ENCODE measurements at regions of chr14 and their contacts with region 1.

Region 1: GRCh38 chr14:94380225-94381148 is 7.9 kb downstream of the SERPINA1 start:
- DNase-seq: no peak
- ATAC-seq: no peak
- H3K4me3 ChIP-seq: no peak overlapping the region
- H3K27ac ChIP-seq: no peak overlapping the region
- H3K4me1 ChIP-seq: peaks cover 0 to 19% (median 0%) of the 10 kb centered on the region in 12 donors
- H3K27me3 ChIP-seq: peaks cover 0 to 22% (median 0%) of the 10 kb centered on the region in 9 donors
- CTCF ChIP-seq: no peak
- POLR2A ChIP-seq: no peak

Region 2: DNA sequence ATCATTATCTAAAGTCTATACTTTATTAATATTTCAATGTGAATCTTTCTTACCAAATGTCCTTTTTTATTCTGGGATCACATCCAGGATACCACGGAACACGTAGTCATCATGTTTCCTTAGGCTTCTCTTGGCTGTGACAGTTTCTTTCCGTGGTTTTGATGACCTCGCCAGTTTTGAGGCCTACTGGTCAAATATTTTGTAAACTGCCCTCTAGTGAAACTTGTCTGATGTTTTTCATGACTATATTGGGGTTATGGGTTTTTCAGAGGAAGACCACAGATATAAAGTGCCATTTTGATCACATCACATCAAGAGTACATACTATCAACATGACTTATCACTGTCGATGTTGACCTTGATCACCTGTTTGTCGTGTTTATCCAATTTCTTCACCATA is 43.2 kb before region 1 on chr14:
- intact Hi-C with region 1: no loop called
- DNase-seq: no peak
- ATAC-seq: no peak
- H3K4me3 ChIP-seq: no peak overlapping the region
- H3K27ac ChIP-seq: no peak overlapping the region
- H3K4me1 ChIP-seq: peaks cover 0 to 9% (median 7%) of the 10 kb centered on the region in 12 donors
- H3K27me3 ChIP-seq: no peaks in the 10 kb centered on the region
- CTCF ChIP-seq: no peak
- POLR2A ChIP-seq: no peak

Region 3: GRCh38 chr14:94363151-94363624 is 17.3 kb before region 1 on chr14:
- intact Hi-C with region 1: loop called in 2 of 10 experiments (anchors 1 kb)
- DNase-seq: no peak
- ATAC-seq: peak in 1 of 4 donors; percentile 7
- H3K4me3 ChIP-seq: no peak overlapping the region
- H3K27ac ChIP-seq: no peak overlapping the region
- H3K4me1 ChIP-seq: no peaks in the 10 kb centered on the region
- H3K27me3 ChIP-seq: peaks cover 0 to 7% (median 0%) of the 10 kb centered on the region in 9 donors
- CTCF ChIP-seq: no peak
- POLR2A ChIP-seq: no peak

Measured in heart left ventricle (tissue), 16 donors.